Activated naive CD4-positive, alpha-beta T cell treated with anti-CD3 and anti-CD28 coated beads for 36 hours (primary cell): ENCODE measurements at regions of chr9 and their contacts with region 1.

Region 1: DNA sequence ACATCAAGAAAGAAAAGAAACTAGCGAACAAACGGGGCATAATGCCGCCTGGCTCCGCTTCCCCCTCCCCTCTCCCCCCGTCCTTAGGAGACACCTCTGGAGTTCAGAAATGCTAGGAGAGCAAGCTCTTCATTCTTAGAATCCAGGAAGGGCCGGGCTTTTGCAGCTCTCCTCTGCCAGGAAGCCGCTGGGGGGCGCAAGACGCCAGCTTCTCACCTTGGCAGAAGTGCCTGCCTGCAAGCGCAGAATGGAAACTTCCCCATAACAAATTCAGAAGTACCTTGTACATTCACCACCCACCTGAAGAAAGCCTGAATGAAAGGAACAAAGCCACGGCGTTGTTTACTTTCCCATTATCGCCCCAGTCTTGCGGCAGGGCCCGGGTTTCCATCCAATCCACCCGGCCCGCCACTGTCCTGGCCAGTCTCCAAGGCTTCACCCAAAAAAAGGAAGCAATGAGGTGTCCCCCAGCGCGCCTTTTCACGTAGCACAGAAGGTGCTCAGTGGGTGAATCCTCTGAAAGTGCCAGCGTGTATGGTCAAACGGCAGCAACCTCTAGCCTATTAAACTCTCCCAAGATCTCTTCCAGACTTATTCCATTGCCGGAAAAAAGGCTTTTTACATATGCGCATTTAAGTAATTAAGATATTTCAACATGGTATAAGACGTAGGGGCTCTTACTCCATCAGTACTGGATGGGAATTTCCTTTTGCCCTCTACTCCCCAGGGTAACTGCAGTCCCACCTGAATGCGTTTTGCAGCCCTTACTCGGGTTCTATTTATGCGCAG is 1.6 kb upstream of the GADD45G start:
- DNase-seq: peak; percentile 95
- H3K4me3 Mint-ChIP-seq: peak overlapping the region; percentile 84
- H3K27ac Mint-ChIP-seq: peak overlapping the region; percentile 50
- H3K4me1 Mint-ChIP-seq: peaks cover 34% of the 10 kb centered on the region
- H3K27me3 Mint-ChIP-seq: peaks cover 3% of the 10 kb centered on the region

Region 2: DNA sequence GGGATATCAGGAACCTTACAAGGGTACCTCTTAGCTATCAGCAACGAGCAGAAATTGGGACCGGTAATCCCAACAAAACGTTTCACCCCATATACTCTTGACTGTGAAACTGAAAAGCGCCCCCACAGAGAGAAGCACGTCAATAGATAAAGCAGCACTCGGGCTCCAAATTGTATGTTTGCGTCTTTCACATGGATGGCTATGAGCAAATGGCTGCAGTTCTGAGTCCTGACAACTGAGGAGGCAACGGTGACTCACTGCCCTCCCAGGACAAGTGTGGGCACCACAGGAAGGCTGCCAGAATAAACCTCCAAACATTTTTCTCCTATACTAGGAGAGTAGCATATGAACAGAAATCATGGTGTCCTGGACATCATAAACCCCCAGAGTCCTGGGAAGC is 141.9 kb before region 1 on chr9:
- CTCF ChIA-PET with region 1: no interaction called
- intact Hi-C with region 1: loop called (anchors 5 kb)
- DNase-seq: peak; percentile 71
- H3K4me3 Mint-ChIP-seq: no peak overlapping the region
- H3K27ac Mint-ChIP-seq: peak overlapping the region; percentile 50
- H3K4me1 Mint-ChIP-seq: peaks cover 96% of the 10 kb centered on the region
- H3K27me3 Mint-ChIP-seq: no peaks in the 10 kb centered on the region

Region 3: DNA sequence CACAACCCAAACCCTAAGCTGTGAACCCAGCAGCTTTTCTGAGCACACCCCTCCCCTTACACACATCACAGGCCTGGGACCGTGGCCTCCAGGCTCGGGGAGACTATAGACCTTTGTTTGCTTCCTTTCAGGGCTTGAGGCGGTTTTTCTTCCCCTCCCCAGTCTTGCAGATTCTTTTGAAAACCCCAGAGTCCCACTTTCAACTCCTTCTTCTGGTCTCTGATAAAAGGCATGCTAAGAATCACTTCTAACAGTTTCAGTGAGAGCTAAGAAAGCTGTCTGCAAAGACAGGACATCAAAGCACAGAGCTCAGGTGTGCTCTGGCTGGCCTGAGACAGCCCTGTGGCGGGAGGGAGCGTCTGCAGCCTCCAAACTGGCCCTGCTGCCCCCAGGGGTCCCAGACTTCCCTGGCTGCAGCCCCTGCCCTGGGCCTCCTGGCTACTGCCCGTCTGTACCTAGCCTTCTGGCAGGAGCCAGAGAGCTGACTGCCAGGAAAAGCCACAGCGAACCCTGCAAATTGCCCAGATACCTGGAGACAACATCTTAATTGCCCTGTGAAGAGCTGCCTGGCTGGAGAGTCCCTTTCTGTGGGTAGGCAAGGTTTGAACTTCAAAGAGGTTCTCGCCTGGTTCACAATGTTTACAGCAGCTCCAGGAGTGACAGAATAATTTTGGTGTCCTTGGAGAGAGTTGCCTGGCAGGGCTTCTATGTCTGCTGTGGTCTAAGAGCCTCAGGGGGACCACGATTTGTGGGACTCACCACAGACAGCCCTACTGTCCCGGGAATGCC is 140.6 kb after region 1 on chr9:
- CTCF ChIA-PET with region 1: interaction called, 12 read pairs
- intact Hi-C with region 1: loop called (anchors 1 kb)
- DNase-seq: peak; percentile 69
- H3K4me3 Mint-ChIP-seq: no peak overlapping the region
- H3K27ac Mint-ChIP-seq: peak overlapping the region; percentile 85
- H3K4me1 Mint-ChIP-seq: peaks cover 70% of the 10 kb centered on the region
- H3K27me3 Mint-ChIP-seq: no peaks in the 10 kb centered on the region

Region 4: DNA sequence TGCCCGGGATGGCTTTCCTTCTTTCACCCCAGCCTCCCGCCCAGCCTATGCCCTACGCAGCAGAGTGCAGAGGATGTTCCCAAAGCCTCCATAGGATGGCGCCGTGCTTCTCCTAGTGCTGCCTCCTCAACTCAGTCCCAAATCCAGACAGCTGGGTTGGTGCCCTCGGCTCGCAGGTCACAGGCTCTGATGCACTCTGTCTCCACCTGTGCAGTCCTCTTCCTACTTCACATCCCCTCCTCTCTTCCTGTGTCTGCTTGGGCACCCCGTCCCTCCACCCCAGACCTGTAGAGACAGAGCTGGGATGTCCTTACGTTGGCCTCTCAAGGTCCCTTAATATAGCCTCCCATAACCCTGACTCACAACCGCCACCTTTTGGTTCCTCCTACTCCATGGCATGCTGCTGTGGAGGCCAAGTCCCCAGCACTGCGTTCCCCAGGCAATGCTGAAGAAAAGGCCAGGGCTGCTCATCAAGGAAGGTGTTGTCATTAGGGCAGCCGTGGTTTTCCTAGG is 316.1 kb after region 1 on chr9:
- CTCF ChIA-PET with region 1: interaction called, 13 read pairs
- intact Hi-C with region 1: loop called (anchors 1 kb)
- DNase-seq: peak; percentile 73
- H3K4me3 Mint-ChIP-seq: no peak overlapping the region
- H3K27ac Mint-ChIP-seq: no peak overlapping the region
- H3K4me1 Mint-ChIP-seq: peaks cover 14% of the 10 kb centered on the region
- H3K27me3 Mint-ChIP-seq: peaks cover 2% of the 10 kb centered on the region

Region 5: GRCh38 chr9:90095682-90096081 is 492.5 kb after region 1 on chr9:
- CTCF ChIA-PET with region 1: interaction called, 110 read pairs
- intact Hi-C with region 1: no loop called
- DNase-seq: peak; percentile 28
- H3K4me3 Mint-ChIP-seq: no peak overlapping the region
- H3K27ac Mint-ChIP-seq: no peak overlapping the region
- H3K4me1 Mint-ChIP-seq: peaks cover 21% of the 10 kb centered on the region
- H3K27me3 Mint-ChIP-seq: peaks cover 6% of the 10 kb centered on the region

Region 6: GRCh38 chr9:90870621-90871326 is 1267.6 kb after region 1 on chr9:
- CTCF ChIA-PET with region 1: no interaction called
- intact Hi-C with region 1: loop called (anchors 10 kb)
- DNase-seq: peak; percentile 67
- H3K4me3 Mint-ChIP-seq: no peak overlapping the region
- H3K27ac Mint-ChIP-seq: no peak overlapping the region
- H3K4me1 Mint-ChIP-seq: no peaks in the 10 kb centered on the region
- H3K27me3 Mint-ChIP-seq: peaks cover 7% of the 10 kb centered on the region